ENCODE measurements at regions of chr20 and their contacts with region 1.

Region 1: DNA sequence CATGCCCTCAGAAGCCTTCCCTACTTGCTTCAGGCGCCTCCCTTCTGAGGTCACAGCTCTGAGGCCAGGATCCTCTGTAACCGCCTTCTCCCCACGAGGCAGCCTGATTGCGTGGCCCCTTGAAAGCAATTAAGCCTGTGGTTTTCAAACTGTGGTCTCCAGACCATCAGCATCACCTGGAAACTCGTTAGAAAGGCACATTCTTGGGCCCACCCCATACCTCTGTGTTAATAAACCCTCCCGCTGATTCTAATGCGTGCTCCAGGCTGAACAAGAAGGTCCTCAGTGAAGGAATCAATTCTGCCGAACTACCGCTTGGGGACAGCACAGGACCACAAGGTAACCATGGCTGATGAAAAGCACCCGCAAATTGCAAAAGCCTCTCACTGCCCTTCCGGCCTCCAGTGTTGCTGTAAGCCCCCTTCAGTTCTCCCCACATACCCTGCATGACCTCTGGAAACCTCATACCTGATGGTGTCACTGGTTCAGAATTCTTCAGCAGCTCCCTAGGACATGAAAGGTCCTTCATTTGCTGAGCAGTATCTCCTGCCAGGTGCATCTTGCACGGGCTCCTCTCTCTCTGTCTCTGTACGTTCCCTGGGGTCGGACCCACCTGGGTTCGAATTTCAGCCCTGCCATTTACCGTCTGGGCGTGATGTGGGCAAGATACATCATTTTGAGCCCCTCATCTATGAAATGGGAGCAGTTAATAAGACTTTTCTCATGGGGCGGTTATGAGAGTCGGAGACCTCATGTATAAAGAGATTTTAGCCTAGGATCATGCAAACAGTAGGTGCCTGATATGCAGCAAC is 93.3 kb upstream of the RNF24 start:
- DNase-seq: no peak
- H3K4me3 ChIP-seq: no peak overlapping the region
- CTCF ChIP-seq: peak; percentile 96

Region 2: DNA sequence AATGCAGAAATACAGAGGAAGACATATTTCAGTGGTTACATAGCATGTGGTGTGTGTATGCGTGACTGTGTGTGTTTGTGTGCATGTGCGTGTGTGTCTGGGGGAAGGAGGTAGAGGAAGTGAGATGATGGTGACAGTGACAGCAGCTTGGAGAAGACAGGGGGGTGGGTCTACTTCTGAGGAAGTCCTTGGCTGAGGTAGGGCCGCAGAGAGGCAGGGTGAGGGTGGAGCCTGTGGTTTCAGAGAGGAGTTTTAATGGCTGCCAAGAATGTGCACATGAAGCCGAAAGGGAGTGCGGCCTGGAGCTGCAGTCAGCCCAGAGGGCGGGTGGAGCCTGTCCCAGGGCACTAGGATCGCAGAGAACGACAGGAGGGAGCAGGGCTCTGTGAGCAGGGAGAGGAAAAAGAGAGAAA is 70.6 kb before region 1 on chr20:
- CTCF ChIA-PET with region 1: no interaction called
- POLR2A ChIA-PET with region 1: no interaction called
- DNase-seq: no peak
- H3K4me3 ChIP-seq: no peak overlapping the region
- CTCF ChIP-seq: no peak

Region 3: DNA sequence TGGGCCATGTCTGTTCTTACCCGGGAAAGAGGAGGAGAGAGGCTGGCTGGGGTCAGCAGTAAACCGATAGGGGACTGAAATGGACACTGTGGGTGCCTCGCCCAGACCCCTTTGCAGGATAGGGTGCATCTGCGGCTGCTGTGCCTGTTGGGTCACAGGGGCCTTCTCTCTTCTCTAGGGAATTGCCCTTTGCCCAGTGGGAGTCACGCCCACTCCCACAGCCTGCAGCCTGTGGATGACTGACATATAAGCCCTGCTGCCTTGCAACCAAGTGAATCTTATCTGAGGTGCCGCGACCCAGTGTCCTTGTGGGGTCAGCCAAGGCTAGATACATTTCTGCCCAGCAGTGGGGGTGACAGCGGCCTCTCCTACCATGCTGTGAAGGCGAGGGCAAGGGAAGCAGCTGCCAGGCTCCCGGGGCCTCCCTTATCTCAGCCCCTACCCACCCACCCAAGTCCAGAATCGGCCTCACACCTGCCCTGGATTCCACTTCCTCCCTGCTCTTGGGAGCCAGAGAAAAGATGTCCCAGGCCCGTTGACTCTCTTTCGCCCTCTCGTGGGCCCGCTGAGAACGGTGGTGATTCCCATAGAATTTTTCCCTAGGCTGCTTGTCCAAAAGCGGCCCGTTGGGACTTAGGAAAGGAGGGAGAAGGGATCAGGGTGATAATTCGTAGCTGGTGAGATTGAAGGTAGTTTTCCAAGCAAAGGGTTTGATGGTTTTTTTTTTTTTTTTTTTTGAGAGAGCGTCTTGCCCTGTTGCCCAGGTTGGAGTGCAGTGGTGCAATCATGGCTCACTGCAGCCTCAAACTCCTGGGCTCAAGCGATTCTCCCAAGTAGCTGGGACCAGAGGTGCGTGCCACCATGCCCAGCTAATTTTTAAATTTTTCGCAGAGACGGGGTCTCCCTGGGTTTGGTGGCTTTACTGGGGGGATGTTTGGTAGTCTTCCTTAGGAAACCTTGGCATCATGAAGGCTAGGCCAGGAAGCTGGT is 16.9 kb before region 1 on chr20:
- CTCF ChIA-PET with region 1: interaction called, 13 read pairs
- POLR2A ChIA-PET with region 1: no interaction called
- DNase-seq: no peak
- H3K4me3 ChIP-seq: no peak overlapping the region
- CTCF ChIP-seq: peak; percentile 82

Region 4: GRCh38 chr20:4119854-4120209 is 11.1 kb after region 1 on chr20:
- CTCF ChIA-PET with region 1: interaction called, 18 read pairs
- POLR2A ChIA-PET with region 1: interaction called, 3 read pairs
- DNase-seq: no peak
- H3K4me3 ChIP-seq: no peak overlapping the region
- CTCF ChIP-seq: no peak

Region 5: GRCh38 chr20:4167261-4168021 is 58.7 kb after region 1 on chr20:
- CTCF ChIA-PET with region 1: interaction called, 22 read pairs
- POLR2A ChIA-PET with region 1: interaction called, 3 read pairs
- DNase-seq: no peak
- H3K4me3 ChIP-seq: no peak overlapping the region
- CTCF ChIP-seq: no peak

Region 6: GRCh38 chr20:4187147-4187546 is 78.4 kb after region 1 on chr20:
- CTCF ChIA-PET with region 1: interaction called, 27 read pairs
- POLR2A ChIA-PET with region 1: no interaction called
- DNase-seq: no peak
- H3K4me3 ChIP-seq: no peak overlapping the region
- CTCF ChIP-seq: no peak

Region 7: GRCh38 chr20:4195499-4195898 is 86.8 kb after region 1 on chr20:
- CTCF ChIA-PET with region 1: interaction called, 39 read pairs
- POLR2A ChIA-PET with region 1: no interaction called
- DNase-seq: no peak
- H3K4me3 ChIP-seq: no peak overlapping the region
- CTCF ChIP-seq: peak; percentile 67

Region 8: GRCh38 chr20:4244700-4245485 is 136.2 kb after region 1 on chr20:
- CTCF ChIA-PET with region 1: no interaction called
- POLR2A ChIA-PET with region 1: no interaction called
- DNase-seq: no peak
- H3K4me3 ChIP-seq: no peak overlapping the region
- CTCF ChIP-seq: no peak

Region 9: DNA sequence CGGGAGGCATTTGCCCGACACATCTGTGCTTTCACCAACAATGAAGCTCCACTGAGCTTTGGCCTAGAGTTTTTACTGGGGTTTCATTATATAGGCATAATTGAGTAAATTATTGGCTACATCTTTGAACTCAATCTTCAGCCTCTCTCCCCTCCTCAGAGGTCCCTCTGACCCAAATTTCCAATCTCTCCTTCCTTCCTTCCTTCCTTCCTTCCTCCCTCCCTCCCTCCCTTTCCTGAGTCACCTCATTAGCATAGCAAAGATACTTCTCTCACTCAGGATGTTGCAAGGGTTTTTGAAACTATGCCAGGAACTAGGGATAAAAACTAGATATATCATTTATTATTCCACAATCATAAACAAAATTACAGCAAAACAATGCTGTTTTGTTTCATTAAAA is 374.8 kb after region 1 on chr20:
- CTCF ChIA-PET with region 1: no interaction called
- POLR2A ChIA-PET with region 1: no interaction called
- DNase-seq: no peak
- H3K4me3 ChIP-seq: no peak overlapping the region
- CTCF ChIP-seq: no peak

Measured in AG04449 (cell line).